Vagina (tissue), 2 donors: ENCODE measurements at regions of chr20 and their contacts with region 1.

Region 1: DNA sequence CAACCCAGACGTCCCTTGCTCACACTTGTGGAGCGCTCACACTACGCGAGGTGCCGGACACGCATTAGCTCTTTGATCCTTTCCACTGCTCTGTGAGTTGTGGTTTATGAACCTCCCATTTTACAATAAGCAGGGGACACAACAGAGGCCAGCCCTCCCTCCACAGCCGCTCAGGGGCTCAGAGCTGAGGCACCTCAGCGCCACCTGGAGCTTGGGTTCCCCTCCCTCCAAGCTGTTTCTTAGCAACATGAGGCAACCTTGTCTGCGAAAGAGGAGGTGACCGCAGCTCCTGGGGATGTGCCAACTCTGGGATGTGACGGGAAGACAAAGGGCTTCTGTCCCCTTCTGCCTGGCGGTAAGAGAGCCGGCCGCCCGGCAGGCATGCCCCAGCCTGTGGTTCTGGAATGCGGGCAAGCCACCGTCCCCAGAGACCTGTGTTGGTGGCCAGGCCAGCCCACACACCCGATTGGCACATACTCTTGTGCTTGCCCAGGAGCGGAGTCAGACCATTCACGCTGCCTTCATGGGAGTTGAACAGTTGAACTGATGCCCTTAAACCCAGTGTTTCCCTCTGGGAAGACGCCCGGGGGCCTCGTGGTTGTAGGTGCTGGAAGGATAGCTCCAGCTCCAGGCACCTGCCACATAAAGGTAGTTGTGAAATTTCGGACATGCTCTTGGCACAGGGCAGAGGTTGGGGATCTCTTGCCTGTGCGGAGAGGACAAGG is 44.5 kb downstream of the RBM38 start:
- DNase-seq: no peak
- H3K4me3 ChIP-seq: no peak overlapping the region
- H3K27ac ChIP-seq: no peak overlapping the region
- H3K4me1 ChIP-seq: peaks cover 22% of the 10 kb centered on the region
- H3K27me3 ChIP-seq: no peaks in the 10 kb centered on the region
- CTCF ChIP-seq: no peak
- POLR2A ChIP-seq: no peak

Region 2: DNA sequence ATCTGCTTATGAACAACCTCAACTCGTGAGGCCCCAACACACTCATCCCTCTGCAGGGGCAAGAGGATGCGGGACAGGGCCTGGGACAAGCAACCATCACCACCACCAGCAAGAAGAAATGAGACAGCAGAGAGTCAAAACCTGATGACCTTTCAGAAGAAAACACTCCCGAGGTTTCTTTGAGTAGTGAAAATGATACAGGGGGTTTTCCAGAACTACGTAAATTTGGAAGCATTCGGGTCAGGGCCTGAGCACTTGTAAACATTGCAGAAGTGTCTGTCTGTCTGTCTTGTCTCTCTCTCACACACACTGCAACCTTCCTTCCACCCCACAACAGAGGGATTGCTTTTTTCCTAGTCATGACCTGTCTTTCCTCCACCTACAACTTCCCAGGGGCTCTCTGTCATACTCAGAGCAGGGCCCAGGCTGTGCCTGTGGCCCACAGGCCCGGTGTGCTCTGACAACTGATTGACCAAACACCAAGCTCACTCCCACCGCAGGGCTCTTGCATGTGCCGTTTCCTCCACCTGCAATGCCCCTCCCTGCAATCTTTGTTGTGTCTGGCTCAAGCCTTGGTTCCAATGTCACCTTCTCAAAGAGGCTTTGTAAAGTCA is 260.2 kb before region 1 on chr20:
- intact Hi-C with region 1: no loop called
- DNase-seq: no peak
- H3K4me3 ChIP-seq: no peak overlapping the region
- H3K27ac ChIP-seq: no peak overlapping the region
- H3K4me1 ChIP-seq: no peaks in the 10 kb centered on the region
- H3K27me3 ChIP-seq: no peaks in the 10 kb centered on the region
- CTCF ChIP-seq: no peak
- POLR2A ChIP-seq: no peak

Region 3: GRCh38 chr20:57397693-57398108 is 38.0 kb before region 1 on chr20:
- intact Hi-C with region 1: loop called (anchors 2 kb)
- DNase-seq: no peak
- H3K4me3 ChIP-seq: no peak overlapping the region
- H3K27ac ChIP-seq: peak overlapping the region; percentile 33
- H3K4me1 ChIP-seq: peaks cover 68% of the 10 kb centered on the region
- H3K27me3 ChIP-seq: no peaks in the 10 kb centered on the region
- CTCF ChIP-seq: no peak
- POLR2A ChIP-seq: no peak

Region 4: DNA sequence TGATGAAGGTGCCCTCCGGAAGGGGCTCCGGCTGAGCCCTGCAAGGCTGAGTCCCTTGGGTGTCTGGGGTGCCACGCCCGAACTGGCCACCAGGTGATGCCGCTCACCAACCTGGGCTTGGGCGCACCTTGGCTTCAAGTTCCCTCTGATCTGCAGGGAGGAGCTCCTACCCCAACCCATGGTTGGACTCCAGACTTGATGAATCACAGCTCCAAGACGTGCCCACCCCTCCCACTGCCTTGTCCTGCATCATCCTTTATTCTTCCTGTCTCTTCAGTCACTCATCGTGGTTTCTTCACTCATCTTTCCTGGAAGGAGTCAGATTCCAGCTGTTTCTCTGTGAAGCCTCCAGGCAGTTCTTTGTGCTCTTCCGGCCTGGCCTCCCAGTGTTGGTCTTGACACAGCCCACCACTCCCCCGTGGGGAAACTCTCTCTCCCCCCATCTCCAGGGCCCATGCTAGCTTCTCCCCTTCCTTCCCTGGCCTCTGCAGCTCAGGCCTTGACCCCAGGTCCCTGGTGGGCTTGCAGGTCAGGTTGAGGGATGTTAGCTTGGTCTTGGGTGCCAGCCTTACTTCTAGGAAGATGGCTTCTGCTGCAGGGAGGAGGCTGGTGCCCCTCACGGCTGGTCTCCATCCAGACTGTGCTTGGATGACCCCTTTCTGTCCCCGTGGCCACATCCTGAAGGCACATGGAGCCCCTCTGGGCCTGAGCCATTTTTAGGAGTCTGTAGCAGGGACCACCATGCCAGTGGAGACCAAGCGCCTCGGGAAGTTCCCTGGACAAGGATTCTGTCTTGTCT is 187.1 kb after region 1 on chr20:
- intact Hi-C with region 1: no loop called
- DNase-seq: peak in 1 of 2 donors; percentile 58
- H3K4me3 ChIP-seq: no peak overlapping the region
- H3K27ac ChIP-seq: no peak overlapping the region
- H3K4me1 ChIP-seq: peaks cover 22% of the 10 kb centered on the region
- H3K27me3 ChIP-seq: no peaks in the 10 kb centered on the region
- CTCF ChIP-seq: peak; percentile 33 to 49 (median 40)
- POLR2A ChIP-seq: no peak

Region 5: GRCh38 chr20:57698117-57698866 is 262.6 kb after region 1 on chr20:
- intact Hi-C with region 1: no loop called
- DNase-seq: no peak
- H3K4me3 ChIP-seq: no peak overlapping the region
- H3K27ac ChIP-seq: peak overlapping the region; percentile 53
- H3K4me1 ChIP-seq: peaks cover 89% of the 10 kb centered on the region
- H3K27me3 ChIP-seq: no peaks in the 10 kb centered on the region
- CTCF ChIP-seq: no peak
- POLR2A ChIP-seq: no peak